ENCODE measurements at regions of chr19 and their contacts with region 1.

Region 1: DNA sequence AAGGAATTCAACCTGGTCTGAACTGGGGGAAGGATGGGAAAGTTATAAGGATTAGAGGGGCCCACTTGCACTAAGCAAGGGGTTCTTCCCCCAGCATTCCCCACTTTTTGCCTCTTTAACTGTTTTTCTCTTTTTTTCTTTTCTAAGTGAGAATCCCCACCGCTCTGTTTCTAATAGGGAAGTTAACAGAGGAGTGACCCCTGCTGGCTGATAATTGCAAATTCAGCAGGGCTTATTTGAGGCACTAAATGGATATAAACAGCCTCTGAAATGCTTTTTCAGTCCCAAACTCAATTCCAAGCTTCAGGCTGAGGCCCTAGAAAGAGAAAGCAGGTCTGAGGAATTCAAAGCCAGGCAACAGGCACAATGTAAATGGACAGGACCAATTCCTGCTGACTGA is 38.2 kb upstream of the CEACAM21 start:
- DNase-seq: peak; percentile 38 to 64 (median 58)
- H3K4me3 ChIP-seq: no peak overlapping the region
- H3K4me3 Mint-ChIP-seq: no peak overlapping the region
- H3K27ac ChIP-seq: no peak overlapping the region
- H3K27ac Mint-ChIP-seq: no peak overlapping the region
- H3K4me1 ChIP-seq: peaks cover 27 to 38% of the 10 kb centered on the region in 2 donors
- H3K4me1 Mint-ChIP-seq: peaks cover 31% of the 10 kb centered on the region
- H3K27me3 ChIP-seq: no peaks in the 10 kb centered on the region
- H3K27me3 Mint-ChIP-seq: peaks cover 0 to 5% (median 3%) of the 10 kb centered on the region in 3 donors
- CTCF ChIP-seq: peak; percentile 85

Region 2: DNA sequence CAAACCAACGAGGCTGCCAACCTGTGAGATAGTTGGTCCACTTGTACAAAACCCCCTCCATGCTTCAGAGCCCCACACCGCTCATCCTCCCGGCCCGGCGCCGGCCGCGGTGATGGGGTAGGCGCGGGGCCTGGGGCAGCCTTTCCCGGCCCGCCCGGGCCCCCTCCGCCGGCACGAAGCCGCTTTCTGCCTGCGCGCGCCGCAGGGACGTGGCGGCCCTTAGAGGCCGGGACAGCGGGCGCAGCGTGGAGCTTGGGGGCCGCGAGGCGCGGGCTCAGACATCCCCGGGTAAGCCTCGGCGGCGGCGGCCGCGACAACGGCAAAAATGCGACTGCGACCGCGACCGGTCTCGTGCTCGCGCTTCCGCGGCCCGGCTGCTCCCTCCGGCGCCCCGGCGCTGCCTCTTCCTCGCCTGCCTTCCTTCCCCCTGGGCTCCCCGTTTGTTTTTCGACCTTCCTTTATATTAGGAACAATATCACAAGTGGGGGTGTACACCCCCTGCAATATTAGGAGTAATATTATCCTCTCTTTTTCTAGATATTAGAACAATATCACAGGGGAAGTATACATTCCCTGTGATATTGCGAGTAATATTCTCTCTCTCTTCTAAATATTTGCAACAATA is 15.7 kb before region 1 on chr19:
- intact Hi-C with region 1: loop called in 1 of 2 experiments (anchors 2 kb)
- DNase-seq: peak in 1 of 3 donors; percentile 18
- H3K4me3 ChIP-seq: peak overlapping the region; percentile 28 to 70 (median 66)
- H3K4me3 Mint-ChIP-seq: peak overlapping the region; percentile 80 to 86
- H3K27ac ChIP-seq: peak overlapping the region; percentile 10 to 70
- H3K27ac Mint-ChIP-seq: peak overlapping the region; percentile 84 to 94 (median 89)
- H3K4me1 ChIP-seq: peaks cover 19 to 31% of the 10 kb centered on the region in 2 donors
- H3K4me1 Mint-ChIP-seq: peaks cover 37% of the 10 kb centered on the region
- H3K27me3 ChIP-seq: no peaks in the 10 kb centered on the region
- H3K27me3 Mint-ChIP-seq: peaks cover 0 to 8% (median 1%) of the 10 kb centered on the region in 3 donors
- CTCF ChIP-seq: no peak

Region 3: GRCh38 chr19:41570639-41571112 is 32.9 kb after region 1 on chr19:
- intact Hi-C with region 1: loop called in 1 of 2 experiments (anchors 5 kb)
- DNase-seq: peak; percentile 81 to 84 (median 81)
- H3K4me3 ChIP-seq: no peak overlapping the region
- H3K4me3 Mint-ChIP-seq: no peak overlapping the region
- H3K27ac ChIP-seq: no peak overlapping the region
- H3K27ac Mint-ChIP-seq: peak overlapping the region in 1 of 7 donors; percentile 41
- H3K4me1 ChIP-seq: peaks cover 6 to 7% of the 10 kb centered on the region in 2 donors
- H3K4me1 Mint-ChIP-seq: peaks cover 8% of the 10 kb centered on the region
- H3K27me3 ChIP-seq: peaks cover 5 to 20% of the 10 kb centered on the region in 2 donors
- H3K27me3 Mint-ChIP-seq: peaks cover 13 to 23% (median 13%) of the 10 kb centered on the region in 3 donors
- CTCF ChIP-seq: peak; percentile 92

Measured in CD14-positive monocyte (primary cell).